Naive thymus-derived CD4-positive, alpha-beta T cell (primary cell): ENCODE measurements at regions of chr17 and their contacts with region 1.

Region 1: DNA sequence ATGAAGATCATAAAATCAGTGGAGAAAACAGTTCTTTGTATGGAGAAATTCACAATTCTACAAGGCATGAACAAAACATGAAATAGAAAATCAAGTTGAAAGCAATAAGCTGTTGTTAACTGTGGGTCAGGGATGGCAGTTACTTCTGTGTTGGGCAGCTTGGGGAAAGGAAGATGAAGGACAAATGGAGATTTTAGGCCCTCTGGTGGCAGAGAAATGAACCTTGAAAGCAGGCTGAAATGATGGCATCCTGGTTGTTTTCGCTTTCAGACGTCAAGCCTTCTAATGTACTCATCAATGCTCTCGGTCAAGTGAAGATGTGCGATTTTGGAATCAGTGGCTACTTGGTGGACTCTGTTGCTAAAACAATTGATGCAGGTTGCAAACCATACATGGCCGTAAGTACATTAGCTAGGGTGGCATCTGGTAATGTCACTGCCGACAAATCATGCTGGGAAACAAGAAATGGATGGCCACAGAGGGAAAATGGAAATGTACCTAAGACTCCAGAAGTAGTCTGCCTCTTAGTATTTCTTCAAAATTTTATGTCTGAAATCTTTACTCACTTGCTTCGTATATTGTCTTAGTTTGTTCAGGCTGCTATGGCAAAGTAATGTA is 108.9 kb downstream of the MAP2K6 start:
- DNase-seq: peak in 4 of 9 donors; percentile 3 to 22 (median 9)
- ATAC-seq: no peak
- H3K4me3 ChIP-seq: no peak overlapping the region
- H3K4me3 Mint-ChIP-seq: no peak overlapping the region
- H3K27ac ChIP-seq: no peak overlapping the region
- H3K27ac Mint-ChIP-seq: peak overlapping the region in 1 of 9 donors; percentile 20
- H3K4me1 ChIP-seq: no peaks in the 10 kb centered on the region
- H3K4me1 Mint-ChIP-seq: peaks cover 0 to 6% (median 0%) of the 10 kb centered on the region in 7 donors
- H3K27me3 ChIP-seq: no peaks in the 10 kb centered on the region
- H3K27me3 Mint-ChIP-seq: no peaks in the 10 kb centered on the region

Region 2: GRCh38 chr17:69335058-69335457 is 188.3 kb before region 1 on chr17:
- CTCF ChIA-PET with region 1: no interaction called
- POLR2A ChIA-PET with region 1: no interaction called
- intact Hi-C with region 1: loop called (anchors 1 to 2 kb)
- DNase-seq: peak in 2 of 9 donors; percentile 10 to 19
- ATAC-seq: no peak
- H3K4me3 ChIP-seq: no peak overlapping the region
- H3K4me3 Mint-ChIP-seq: peak overlapping the region in 3 of 10 donors; percentile 31 to 58 (median 40)
- H3K27ac ChIP-seq: no peak overlapping the region
- H3K27ac Mint-ChIP-seq: peak overlapping the region in 1 of 9 donors; percentile 26
- H3K4me1 ChIP-seq: no peaks in the 10 kb centered on the region
- H3K4me1 Mint-ChIP-seq: peaks cover 0 to 9% (median 4%) of the 10 kb centered on the region in 7 donors
- H3K27me3 ChIP-seq: no peaks in the 10 kb centered on the region
- H3K27me3 Mint-ChIP-seq: peaks cover 0 to 22% (median 11%) of the 10 kb centered on the region in 5 donors

Region 3: DNA sequence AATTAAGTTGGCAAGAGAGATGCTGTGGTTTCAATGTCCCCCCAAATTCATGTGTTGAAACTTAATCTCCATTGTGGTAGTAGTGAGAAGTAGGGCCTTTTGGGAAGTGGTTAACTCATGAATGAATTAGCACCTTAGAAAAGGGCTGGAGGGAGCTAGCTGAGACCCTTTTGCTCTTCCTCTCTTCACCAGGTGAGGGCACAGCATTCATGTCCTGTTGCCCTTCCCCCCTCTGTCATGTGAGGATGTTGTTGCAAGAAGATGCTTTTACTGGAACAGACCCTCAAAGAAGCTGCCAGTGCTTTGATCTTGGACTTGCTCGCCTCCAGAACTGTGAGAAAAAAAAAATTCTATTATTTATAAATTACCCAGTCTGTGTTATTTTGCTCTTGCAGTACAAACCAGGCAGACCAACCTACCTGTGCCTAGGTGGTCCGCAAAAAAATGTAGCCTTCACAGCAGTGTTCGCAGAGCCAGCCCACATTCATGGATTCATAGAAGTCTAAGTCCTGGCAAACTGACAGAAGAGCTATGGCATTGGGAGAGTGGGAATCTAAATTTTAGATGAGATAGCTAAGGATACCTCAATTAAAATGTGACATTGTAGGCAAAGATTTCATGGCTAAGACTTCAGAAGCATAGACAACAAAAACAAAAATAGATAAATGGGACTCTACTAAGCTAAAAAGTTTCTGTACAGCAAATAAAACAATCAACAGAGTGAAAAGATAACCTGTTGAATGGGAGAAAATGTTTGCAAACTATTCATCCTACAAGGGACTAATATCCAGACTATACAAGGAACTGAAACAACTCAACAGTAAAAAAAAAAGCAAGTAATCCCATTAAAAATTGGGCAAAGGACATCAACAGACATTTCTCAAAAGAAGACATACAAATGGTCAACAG is 164.4 kb before region 1 on chr17:
- CTCF ChIA-PET with region 1: interaction called, 3 read pairs
- POLR2A ChIA-PET with region 1: no interaction called
- intact Hi-C with region 1: loop called in 1 of 2 experiments (anchors 1 kb)
- DNase-seq: peak in 5 of 9 donors; percentile 5 to 28 (median 6)
- ATAC-seq: no peak
- H3K4me3 ChIP-seq: no peak overlapping the region
- H3K4me3 Mint-ChIP-seq: no peak overlapping the region
- H3K27ac ChIP-seq: no peak overlapping the region
- H3K27ac Mint-ChIP-seq: no peak overlapping the region
- H3K4me1 ChIP-seq: no peaks in the 10 kb centered on the region
- H3K4me1 Mint-ChIP-seq: no peaks in the 10 kb centered on the region
- H3K27me3 ChIP-seq: no peaks in the 10 kb centered on the region
- H3K27me3 Mint-ChIP-seq: peaks cover 0 to 15% (median 4%) of the 10 kb centered on the region in 5 donors

Region 4: GRCh38 chr17:69388822-69389442 is 134.4 kb before region 1 on chr17:
- CTCF ChIA-PET with region 1: interaction called, 5 read pairs
- POLR2A ChIA-PET with region 1: no interaction called
- intact Hi-C with region 1: loop called in 1 of 2 experiments (anchors 1 kb)
- DNase-seq: no peak
- ATAC-seq: no peak
- H3K4me3 ChIP-seq: no peak overlapping the region
- H3K4me3 Mint-ChIP-seq: no peak overlapping the region
- H3K27ac ChIP-seq: no peak overlapping the region
- H3K27ac Mint-ChIP-seq: no peak overlapping the region
- H3K4me1 ChIP-seq: no peaks in the 10 kb centered on the region
- H3K4me1 Mint-ChIP-seq: no peaks in the 10 kb centered on the region
- H3K27me3 ChIP-seq: no peaks in the 10 kb centered on the region
- H3K27me3 Mint-ChIP-seq: peaks cover 3 to 29% (median 10%) of the 10 kb centered on the region in 5 donors